ENCODE measurements at regions of chrX and their contacts with region 1.

Region 1: DNA sequence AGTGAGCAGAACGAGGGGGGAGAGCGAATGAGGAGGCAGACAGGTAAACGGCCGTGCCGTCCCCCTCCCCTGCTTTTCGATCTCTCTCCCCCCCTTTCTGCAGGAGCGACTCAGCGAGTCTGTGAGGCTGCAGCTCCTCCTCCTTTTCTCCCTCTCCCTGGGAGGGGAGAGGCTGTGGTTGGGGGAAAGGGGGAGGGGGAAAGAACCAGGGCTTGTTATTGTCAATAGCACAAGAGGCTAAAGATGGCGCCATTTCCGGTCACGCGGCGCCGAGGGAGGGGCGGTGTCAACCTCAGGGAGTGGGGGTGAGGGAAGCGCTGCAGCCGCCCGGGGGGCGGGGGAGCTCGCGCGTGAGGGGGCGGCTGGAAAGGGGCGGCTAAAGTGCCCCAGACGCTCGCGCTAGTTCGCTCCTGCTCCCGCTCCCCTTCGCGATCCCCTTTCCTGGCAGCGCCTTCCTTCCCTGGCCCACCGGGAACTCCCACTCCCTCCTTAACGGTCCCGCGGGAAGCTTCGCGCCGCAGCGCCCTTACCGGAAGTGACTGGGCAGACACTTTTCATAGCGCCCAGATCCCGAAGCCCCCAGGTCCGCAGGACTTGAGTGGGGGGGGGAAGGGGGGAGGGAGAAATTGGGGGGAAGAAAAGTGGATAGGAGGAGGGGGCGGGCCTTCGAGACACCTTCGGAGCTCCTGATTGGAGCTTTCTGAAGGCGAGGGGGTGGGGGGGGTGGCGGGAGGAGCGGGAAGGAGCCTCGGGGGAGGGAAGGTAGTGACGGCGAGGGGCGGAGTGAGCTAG is at the start of gene CUL4B:
- DNase-seq: peak; percentile 86 to 94
- ATAC-seq: peak; percentile 89 to 96 (median 92)
- H3K4me3 ChIP-seq: peak within 1 kb of the TSS; percentile 99
- H3K4me3 Mint-ChIP-seq: peak within 1 kb of the TSS; percentile 93
- H3K27ac ChIP-seq: peak within 1 kb of the TSS; percentile 100
- H3K27ac Mint-ChIP-seq: peak within 1 kb of the TSS; percentile 91
- H3K4me1 ChIP-seq: peaks cover 3% of the 10 kb centered on the region
- H3K4me1 Mint-ChIP-seq: peaks cover 13 to 28% of the 10 kb centered on the region in 2 donors
- H3K27me3 ChIP-seq: no peaks in the 10 kb centered on the region
- H3K27me3 Mint-ChIP-seq: no peaks in the 10 kb centered on the region
- CTCF ChIP-seq: no peak
- total RNA-seq, gene CUL4B: 32.6 to 42.3 (median 33.3) TPM

Region 2: DNA sequence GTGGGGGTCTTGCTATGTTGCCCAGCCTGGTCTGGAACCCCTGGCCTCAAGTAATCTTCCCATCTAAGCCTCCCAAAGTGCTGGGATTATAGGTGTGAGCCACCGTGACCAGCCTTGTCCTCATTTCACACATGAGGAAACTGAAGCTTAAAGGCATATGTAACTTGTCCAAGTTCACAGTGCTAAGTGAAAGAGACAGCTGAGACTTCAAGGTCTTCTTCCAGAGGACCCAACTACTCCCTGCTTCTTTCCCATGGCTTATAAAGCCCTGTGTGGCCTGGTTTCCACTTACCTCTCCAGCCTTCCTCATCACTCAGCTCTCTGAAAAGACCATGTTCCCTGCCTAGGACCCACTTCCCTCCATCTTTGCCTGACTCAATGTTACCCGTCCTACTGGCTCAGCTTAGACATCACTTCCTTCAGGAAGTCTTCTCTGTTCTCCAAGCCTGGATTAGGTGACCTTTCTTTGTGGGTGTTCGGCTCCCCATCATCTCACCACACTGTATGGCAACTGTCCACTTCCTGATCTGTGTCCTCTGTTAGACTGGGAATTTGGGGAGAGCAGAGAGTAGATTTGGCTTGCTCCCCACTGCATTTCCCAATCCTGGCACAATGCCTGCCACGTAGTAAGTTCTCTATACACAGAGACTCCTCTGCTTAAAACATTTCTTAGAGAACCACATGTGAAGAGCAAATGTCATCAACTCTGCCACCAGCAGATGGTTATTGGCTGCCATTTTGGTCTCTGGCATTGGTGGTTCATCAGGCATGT is 61.6 kb before region 1 on chrX:
- intact Hi-C with region 1: loop called (anchors 5 kb)
- DNase-seq: no peak
- ATAC-seq: no peak
- H3K4me3 ChIP-seq: no peak overlapping the region
- H3K4me3 Mint-ChIP-seq: no peak overlapping the region
- H3K27ac ChIP-seq: no peak overlapping the region
- H3K27ac Mint-ChIP-seq: peak overlapping the region in 1 of 2 donors; percentile 27
- H3K4me1 ChIP-seq: peaks cover 5% of the 10 kb centered on the region
- H3K4me1 Mint-ChIP-seq: peaks cover 6% of the 10 kb centered on the region in 2 donors
- H3K27me3 ChIP-seq: no peaks in the 10 kb centered on the region
- H3K27me3 Mint-ChIP-seq: no peaks in the 10 kb centered on the region
- CTCF ChIP-seq: no peak

Region 3: DNA sequence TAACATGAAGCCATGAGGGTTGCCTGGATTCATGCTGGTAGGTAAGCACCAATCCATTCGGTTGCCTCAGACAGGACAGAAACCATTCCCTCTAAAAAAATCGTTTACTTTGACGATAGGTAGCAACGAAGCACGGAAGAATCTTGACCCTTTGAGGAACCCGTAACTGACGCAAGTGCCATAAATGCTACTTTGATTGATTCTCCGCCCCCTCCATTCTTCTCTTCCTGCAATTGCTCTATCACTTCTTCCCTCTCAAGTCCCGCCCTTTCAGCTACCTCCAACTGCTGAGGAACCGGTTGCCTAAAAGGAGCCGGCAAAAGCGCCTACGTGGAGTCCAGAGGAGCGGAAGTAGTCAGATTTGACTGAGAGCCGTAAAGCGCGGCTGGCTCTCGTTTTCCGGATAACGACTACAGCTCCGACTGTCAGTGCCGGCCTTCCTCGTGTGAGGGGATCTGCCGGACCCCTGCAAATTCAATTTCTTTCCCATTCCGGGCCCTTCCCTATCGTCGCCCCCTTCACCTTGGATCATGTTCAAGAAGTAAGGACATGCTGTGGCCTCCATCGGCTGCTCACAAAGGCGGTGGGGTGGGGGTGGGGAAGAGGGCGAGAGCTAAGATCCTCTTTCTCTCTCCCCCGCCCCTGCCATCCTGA is 42.8 kb after region 1 on chrX and contains the start of gene MCTS1:
- intact Hi-C with region 1: loop called (anchors 1 kb)
- DNase-seq: peak; percentile 55 to 91
- ATAC-seq: peak; percentile 82 to 91 (median 89)
- H3K4me3 ChIP-seq: peak within 1 kb of the TSS; percentile 78
- H3K4me3 Mint-ChIP-seq: peak within 1 kb of the TSS; percentile 94
- H3K27ac ChIP-seq: peak within 1 kb of the TSS; percentile 87
- H3K27ac Mint-ChIP-seq: peak within 1 kb of the TSS; percentile 91 to 99
- H3K4me1 ChIP-seq: peaks cover 4% of the 10 kb centered on the region
- H3K4me1 Mint-ChIP-seq: peaks cover 10 to 15% of the 10 kb centered on the region in 2 donors
- H3K27me3 ChIP-seq: no peaks in the 10 kb centered on the region
- H3K27me3 Mint-ChIP-seq: no peaks in the 10 kb centered on the region
- CTCF ChIP-seq: no peak
- total RNA-seq, gene MCTS1: 17.6 to 21.2 (median 18.8) TPM

Region 4: DNA sequence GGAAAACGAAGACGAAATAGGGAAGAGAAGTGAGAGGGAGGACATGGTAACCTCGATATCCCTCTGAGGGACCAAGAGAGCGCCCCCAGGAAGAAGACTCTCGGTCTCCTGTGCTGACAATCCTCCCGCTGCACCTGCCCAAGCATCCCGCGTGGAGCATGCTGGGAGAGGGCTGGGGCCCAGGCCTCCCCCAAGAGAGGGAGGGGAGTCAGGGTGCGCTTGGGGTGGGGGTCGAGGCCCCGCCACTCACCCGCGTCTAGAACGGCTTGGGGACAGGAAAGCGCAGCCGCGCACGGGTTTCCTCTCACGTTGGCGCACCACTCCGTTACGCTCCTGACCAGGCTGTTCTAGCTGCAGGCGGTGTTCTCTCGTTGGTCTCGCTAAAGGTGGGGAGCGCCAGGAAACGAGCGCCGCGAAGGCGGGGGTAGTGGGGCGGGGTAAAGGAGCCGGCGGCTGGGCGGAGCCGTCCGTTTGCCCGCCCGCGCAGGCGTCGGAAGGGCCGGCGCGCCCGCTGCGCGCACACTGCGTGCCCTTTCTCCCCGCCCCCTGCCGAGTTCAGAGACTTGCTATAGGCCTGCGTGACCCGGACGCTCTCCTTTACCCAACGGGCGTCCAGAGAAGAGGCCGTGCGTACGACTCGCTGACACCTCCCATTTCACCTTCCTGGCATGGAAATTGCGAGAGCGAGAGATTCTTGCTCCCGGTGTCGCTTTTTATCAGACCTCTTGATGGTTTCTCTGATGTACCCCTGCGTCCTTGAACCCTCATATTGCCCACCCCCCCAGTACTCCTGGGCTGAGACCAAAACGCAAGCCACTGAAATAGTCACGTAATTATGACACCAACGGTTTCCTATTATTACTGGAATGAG is 68.9 kb after region 1 on chrX and contains the start of gene C1GALT1C1:
- intact Hi-C with region 1: loop called (anchors 1 kb)
- DNase-seq: peak; percentile 83 to 95
- ATAC-seq: peak; percentile 92 to 98 (median 93)
- H3K4me3 ChIP-seq: peak within 1 kb of the TSS; percentile 70
- H3K4me3 Mint-ChIP-seq: peak within 1 kb of the TSS; percentile 93
- H3K27ac ChIP-seq: peak within 1 kb of the TSS; percentile 98
- H3K27ac Mint-ChIP-seq: peak within 1 kb of the TSS; percentile 92 to 99
- H3K4me1 ChIP-seq: peaks cover 6% of the 10 kb centered on the region
- H3K4me1 Mint-ChIP-seq: peaks cover 5 to 10% of the 10 kb centered on the region in 2 donors
- H3K27me3 ChIP-seq: no peaks in the 10 kb centered on the region
- H3K27me3 Mint-ChIP-seq: no peaks in the 10 kb centered on the region
- CTCF ChIP-seq: no peak
- total RNA-seq, gene C1GALT1C1: 6.2 to 9.7 (median 6.7) TPM

Measured in natural killer cell (primary cell).